ENCODE measurements at regions of chr7 and their contacts with region 1.

Region 1: GRCh38 chr7:89607792-89608191 is 546.5 kb upstream of the STEAP1 start:
- DNase-seq: peak in 8 of 9 donors; percentile 43 to 76 (median 66)
- ATAC-seq: peak; percentile 68
- H3K4me3 ChIP-seq: no peak overlapping the region
- H3K4me3 Mint-ChIP-seq: peak overlapping the region; percentile 61 to 78 (median 68)
- H3K27ac ChIP-seq: peak overlapping the region; percentile 66
- H3K27ac Mint-ChIP-seq: peak overlapping the region; percentile 76 to 96 (median 85)
- H3K4me1 ChIP-seq: peaks cover 0 to 65% of the 10 kb centered on the region in 2 donors
- H3K4me1 Mint-ChIP-seq: peaks cover 27 to 91% (median 85%) of the 10 kb centered on the region in 7 donors
- H3K27me3 ChIP-seq: no peaks in the 10 kb centered on the region
- H3K27me3 Mint-ChIP-seq: peaks cover 0 to 2% (median 0%) of the 10 kb centered on the region in 5 donors

Region 2: GRCh38 chr7:88219781-88220747 is 1387.7 kb before region 1 on chr7 and contains the start of gene SRI:
- CTCF ChIA-PET with region 1: no interaction called
- POLR2A ChIA-PET with region 1: no interaction called
- intact Hi-C with region 1: loop called (anchors 5 kb)
- DNase-seq: peak; percentile 85 to 95 (median 93)
- ATAC-seq: peak; percentile 98
- H3K4me3 ChIP-seq: peak within 1 kb of the TSS; percentile 97
- H3K4me3 Mint-ChIP-seq: peak within 1 kb of the TSS; percentile 95 to 99 (median 96)
- H3K27ac ChIP-seq: peak within 1 kb of the TSS; percentile 86
- H3K27ac Mint-ChIP-seq: peak within 1 kb of the TSS; percentile 90 to 99 (median 94)
- H3K4me1 ChIP-seq: peaks cover 15 to 18% of the 10 kb centered on the region in 2 donors
- H3K4me1 Mint-ChIP-seq: peaks cover 13 to 42% (median 34%) of the 10 kb centered on the region in 7 donors
- H3K27me3 ChIP-seq: peaks cover 0 to 4% of the 10 kb centered on the region in 2 donors
- H3K27me3 Mint-ChIP-seq: peaks cover 0 to 8% (median 0%) of the 10 kb centered on the region in 5 donors
- total RNA-seq, gene SRI: 39.9 to 131 (median 60.0) TPM

Region 3: GRCh38 chr7:89563597-89563996 is 44.2 kb before region 1 on chr7:
- CTCF ChIA-PET with region 1: no interaction called
- POLR2A ChIA-PET with region 1: no interaction called
- intact Hi-C with region 1: loop called in 1 of 2 experiments (anchors 5 kb)
- DNase-seq: no peak
- ATAC-seq: no peak
- H3K4me3 ChIP-seq: no peak overlapping the region
- H3K4me3 Mint-ChIP-seq: no peak overlapping the region
- H3K27ac ChIP-seq: no peak overlapping the region
- H3K27ac Mint-ChIP-seq: no peak overlapping the region
- H3K4me1 ChIP-seq: no peaks in the 10 kb centered on the region
- H3K4me1 Mint-ChIP-seq: peaks cover 0 to 7% (median 0%) of the 10 kb centered on the region in 7 donors
- H3K27me3 ChIP-seq: no peaks in the 10 kb centered on the region
- H3K27me3 Mint-ChIP-seq: no peaks in the 10 kb centered on the region

Region 4: DNA sequence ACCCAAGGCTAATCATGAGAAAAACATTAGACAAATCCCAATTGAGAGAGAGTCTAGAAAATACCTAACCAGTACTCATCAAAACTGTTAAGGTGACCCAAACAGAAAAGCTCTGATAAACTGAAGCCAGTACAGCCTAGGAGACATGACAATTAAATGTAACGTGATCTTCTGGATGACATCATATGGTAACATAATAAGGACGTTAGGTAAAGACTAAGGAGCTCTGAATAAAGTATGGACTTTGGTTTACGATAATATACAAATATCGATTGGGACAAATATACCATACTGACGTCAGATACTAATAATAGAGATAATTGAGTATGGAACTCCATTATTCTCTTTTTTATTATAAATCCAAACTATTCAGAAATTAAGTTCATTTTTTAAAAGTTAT is 14.7 kb before region 1 on chr7:
- CTCF ChIA-PET with region 1: no interaction called
- POLR2A ChIA-PET with region 1: no interaction called
- intact Hi-C with region 1: loop called in 1 of 2 experiments (anchors 1 kb)
- DNase-seq: no peak
- ATAC-seq: no peak
- H3K4me3 ChIP-seq: no peak overlapping the region
- H3K4me3 Mint-ChIP-seq: no peak overlapping the region
- H3K27ac ChIP-seq: no peak overlapping the region
- H3K27ac Mint-ChIP-seq: no peak overlapping the region
- H3K4me1 ChIP-seq: no peaks in the 10 kb centered on the region
- H3K4me1 Mint-ChIP-seq: no peaks in the 10 kb centered on the region
- H3K27me3 ChIP-seq: no peaks in the 10 kb centered on the region
- H3K27me3 Mint-ChIP-seq: peaks cover 0 to 9% (median 0%) of the 10 kb centered on the region in 5 donors

Region 5: DNA sequence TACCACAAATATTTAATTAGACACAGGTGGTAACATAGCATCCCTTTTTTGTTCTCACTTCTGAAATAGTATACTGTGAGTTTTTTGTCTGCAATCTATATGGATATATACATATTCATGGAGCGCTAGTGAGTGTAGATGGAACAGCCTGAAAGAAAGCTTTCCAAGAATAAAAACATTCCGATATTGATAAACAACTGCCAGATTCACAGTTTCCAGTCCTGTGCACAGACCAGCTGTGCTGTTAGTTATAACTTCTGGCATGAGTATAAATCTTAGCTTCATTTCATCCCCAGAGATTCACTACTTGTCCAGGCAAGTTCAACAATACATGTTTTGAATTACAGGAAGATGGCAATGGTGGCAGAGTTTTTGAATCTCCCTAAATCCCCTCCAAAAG is 79.4 kb after region 1 on chr7:
- CTCF ChIA-PET with region 1: no interaction called
- POLR2A ChIA-PET with region 1: no interaction called
- intact Hi-C with region 1: no loop called
- DNase-seq: no peak
- ATAC-seq: no peak
- H3K4me3 ChIP-seq: no peak overlapping the region
- H3K4me3 Mint-ChIP-seq: no peak overlapping the region
- H3K27ac ChIP-seq: no peak overlapping the region
- H3K27ac Mint-ChIP-seq: no peak overlapping the region
- H3K4me1 ChIP-seq: no peaks in the 10 kb centered on the region
- H3K4me1 Mint-ChIP-seq: no peaks in the 10 kb centered on the region
- H3K27me3 ChIP-seq: no peaks in the 10 kb centered on the region
- H3K27me3 Mint-ChIP-seq: peaks cover 0 to 5% (median 0%) of the 10 kb centered on the region in 5 donors

Region 6: GRCh38 chr7:89739786-89740185 is 132.0 kb after region 1 on chr7:
- CTCF ChIA-PET with region 1: no interaction called
- POLR2A ChIA-PET with region 1: no interaction called
- intact Hi-C with region 1: no loop called
- DNase-seq: no peak
- ATAC-seq: no peak
- H3K4me3 ChIP-seq: no peak overlapping the region
- H3K4me3 Mint-ChIP-seq: no peak overlapping the region
- H3K27ac ChIP-seq: no peak overlapping the region
- H3K27ac Mint-ChIP-seq: no peak overlapping the region
- H3K4me1 ChIP-seq: no peaks in the 10 kb centered on the region
- H3K4me1 Mint-ChIP-seq: no peaks in the 10 kb centered on the region
- H3K27me3 ChIP-seq: no peaks in the 10 kb centered on the region
- H3K27me3 Mint-ChIP-seq: no peaks in the 10 kb centered on the region

Region 7: GRCh38 chr7:90403174-90404113 is 795.7 kb after region 1 on chr7 and contains the start of gene CLDN12:
- CTCF ChIA-PET with region 1: no interaction called
- POLR2A ChIA-PET with region 1: no interaction called
- intact Hi-C with region 1: loop called in 1 of 2 experiments (anchors 10 kb)
- DNase-seq: peak; percentile 30 to 91 (median 75)
- ATAC-seq: peak; percentile 99
- H3K4me3 ChIP-seq: peak within 1 kb of the TSS; percentile 81
- H3K4me3 Mint-ChIP-seq: peak within 1 kb of the TSS; percentile 90 to 98 (median 94)
- H3K27ac ChIP-seq: peak within 1 kb of the TSS; percentile 73
- H3K27ac Mint-ChIP-seq: peak within 1 kb of the TSS; percentile 62 to 96 (median 94)
- H3K4me1 ChIP-seq: peaks cover 0 to 6% of the 10 kb centered on the region in 2 donors
- H3K4me1 Mint-ChIP-seq: peaks cover 0 to 24% (median 18%) of the 10 kb centered on the region in 7 donors
- H3K27me3 ChIP-seq: no peaks in the 10 kb centered on the region
- H3K27me3 Mint-ChIP-seq: peaks cover 0 to 18% (median 0%) of the 10 kb centered on the region in 5 donors
- total RNA-seq, gene CLDN12: 0.76 to 3.9 (median 2.0) TPM

Region 8: GRCh38 chr7:90424720-90425119 is 816.9 kb after region 1 on chr7:
- CTCF ChIA-PET with region 1: no interaction called
- POLR2A ChIA-PET with region 1: no interaction called
- intact Hi-C with region 1: no loop called
- DNase-seq: no peak
- ATAC-seq: no peak
- H3K4me3 ChIP-seq: no peak overlapping the region
- H3K4me3 Mint-ChIP-seq: peak overlapping the region in 1 of 10 donors; percentile 23
- H3K27ac ChIP-seq: no peak overlapping the region
- H3K27ac Mint-ChIP-seq: peak overlapping the region in 2 of 9 donors; percentile 26 to 60
- H3K4me1 ChIP-seq: no peaks in the 10 kb centered on the region
- H3K4me1 Mint-ChIP-seq: peaks cover 0 to 16% (median 0%) of the 10 kb centered on the region in 7 donors
- H3K27me3 ChIP-seq: no peaks in the 10 kb centered on the region
- H3K27me3 Mint-ChIP-seq: peaks cover 0 to 11% (median 7%) of the 10 kb centered on the region in 5 donors